Activated CD4-positive, alpha-beta T cell treated with anti-CD3 and anti-CD28 coated beads for 36 hours (primary cell): ENCODE measurements at regions of chr6 and their contacts with region 1.

Region 1: DNA sequence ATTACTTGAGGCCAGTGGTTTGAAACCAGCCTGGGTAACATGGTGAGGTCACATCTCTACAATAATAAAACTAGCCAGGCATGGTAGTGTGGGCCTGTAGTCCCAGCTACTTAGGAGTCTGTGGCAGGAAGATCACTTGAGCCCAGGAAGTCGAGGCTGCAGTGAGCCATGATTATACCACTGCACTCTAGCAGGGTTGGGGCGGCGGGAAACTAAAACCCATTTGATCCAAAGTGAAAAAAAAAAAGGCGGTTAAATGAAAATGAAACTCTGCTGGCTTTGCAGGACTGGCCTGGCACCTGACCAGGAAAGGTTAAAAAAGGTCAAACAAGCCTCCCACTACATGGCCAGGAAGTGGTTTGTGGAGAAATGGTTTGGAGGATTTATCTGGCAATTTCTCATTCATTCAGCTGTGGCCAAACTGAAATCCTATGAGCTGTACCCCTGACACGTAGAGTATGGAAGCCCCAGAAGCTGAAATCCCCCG is 36.6 kb downstream of the MTRES1 start:
- DNase-seq: peak; percentile 56
- ATAC-seq: peak; percentile 56
- H3K4me3 Mint-ChIP-seq: no peak overlapping the region
- H3K27ac Mint-ChIP-seq: peak overlapping the region; percentile 79
- H3K4me1 Mint-ChIP-seq: peaks cover 56% of the 10 kb centered on the region
- H3K27me3 Mint-ChIP-seq: no peaks in the 10 kb centered on the region

Region 2: GRCh38 chr6:106858653-106859092 is 205.9 kb before region 1 on chr6:
- CTCF ChIA-PET with region 1: no interaction called
- POLR2A ChIA-PET with region 1: no interaction called
- intact Hi-C with region 1: no loop called
- DNase-seq: no peak
- ATAC-seq: no peak
- H3K4me3 Mint-ChIP-seq: no peak overlapping the region
- H3K27ac Mint-ChIP-seq: no peak overlapping the region
- H3K4me1 Mint-ChIP-seq: no peaks in the 10 kb centered on the region
- H3K27me3 Mint-ChIP-seq: peaks cover 10% of the 10 kb centered on the region

Region 3: DNA sequence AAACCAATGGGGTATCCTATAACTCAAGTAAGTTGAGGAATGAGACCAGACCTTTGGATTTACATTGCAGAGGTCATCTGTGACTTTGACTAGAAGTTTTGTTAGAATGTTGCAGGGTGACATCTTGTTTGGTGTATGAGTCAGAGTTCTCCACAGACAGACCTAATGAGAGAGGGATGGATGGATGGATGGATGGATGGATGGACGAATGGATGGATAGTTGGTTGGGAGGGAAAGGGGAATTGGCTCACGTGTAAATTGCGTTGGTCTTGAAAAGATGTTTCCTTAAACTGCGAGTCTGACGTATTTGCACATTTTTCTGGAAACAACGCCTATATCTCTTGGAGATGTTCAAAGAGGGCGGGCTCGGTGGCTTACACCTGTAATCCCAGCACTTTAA is 37.7 kb before region 1 on chr6:
- CTCF ChIA-PET with region 1: interaction called, 3 read pairs
- POLR2A ChIA-PET with region 1: no interaction called
- intact Hi-C with region 1: loop called (anchors 2 to 5 kb)
- DNase-seq: no peak
- ATAC-seq: no peak
- H3K4me3 Mint-ChIP-seq: peak overlapping the region; percentile 85
- H3K27ac Mint-ChIP-seq: no peak overlapping the region
- H3K4me1 Mint-ChIP-seq: peaks cover 24% of the 10 kb centered on the region
- H3K27me3 Mint-ChIP-seq: no peaks in the 10 kb centered on the region

Region 4: DNA sequence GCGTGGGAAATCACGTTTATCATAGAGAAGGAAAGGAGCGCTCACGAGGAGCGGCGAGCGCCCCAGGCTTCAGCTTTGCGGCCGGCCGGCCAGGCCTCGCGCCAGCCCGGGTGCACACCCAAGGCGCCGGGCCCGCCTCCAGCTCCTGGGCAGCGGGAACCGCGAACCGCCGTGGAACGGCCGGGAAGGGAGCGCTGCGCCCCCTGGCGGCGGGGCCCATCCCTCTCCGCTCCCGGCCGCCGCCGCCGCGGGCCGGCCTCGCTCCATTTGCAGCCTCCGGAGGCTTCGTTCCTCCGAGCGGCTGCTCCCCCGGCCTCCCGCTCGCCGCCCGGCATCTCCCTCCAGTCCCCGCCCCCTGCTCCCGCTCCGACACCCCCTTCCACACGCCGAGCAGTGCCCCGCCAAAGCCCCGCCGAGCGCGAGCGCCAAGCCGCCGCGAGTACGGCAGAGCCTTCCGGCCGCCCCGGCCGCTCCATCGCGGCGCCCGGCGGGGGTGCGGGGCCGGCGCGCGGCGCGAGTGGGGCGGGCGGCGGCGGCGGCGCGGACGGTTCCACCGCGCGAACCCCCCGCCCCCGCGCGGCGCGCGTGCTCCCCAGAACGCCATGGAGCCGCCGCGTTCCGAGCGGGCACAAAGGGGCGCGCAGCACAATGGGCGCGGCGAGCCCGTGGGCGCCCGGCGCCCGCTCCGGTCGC is 49.7 kb after region 1 on chr6:
- CTCF ChIA-PET with region 1: interaction called, 11 read pairs
- POLR2A ChIA-PET with region 1: no interaction called
- intact Hi-C with region 1: loop called (anchors 2 to 5 kb)
- DNase-seq: peak; percentile 84
- ATAC-seq: peak; percentile 62
- H3K4me3 Mint-ChIP-seq: peak overlapping the region; percentile 67
- H3K27ac Mint-ChIP-seq: peak overlapping the region; percentile 65
- H3K4me1 Mint-ChIP-seq: peaks cover 21% of the 10 kb centered on the region
- H3K27me3 Mint-ChIP-seq: peaks cover 5% of the 10 kb centered on the region